ENCODE measurements at regions of chr5 and their contacts with region 1.

Region 1: DNA sequence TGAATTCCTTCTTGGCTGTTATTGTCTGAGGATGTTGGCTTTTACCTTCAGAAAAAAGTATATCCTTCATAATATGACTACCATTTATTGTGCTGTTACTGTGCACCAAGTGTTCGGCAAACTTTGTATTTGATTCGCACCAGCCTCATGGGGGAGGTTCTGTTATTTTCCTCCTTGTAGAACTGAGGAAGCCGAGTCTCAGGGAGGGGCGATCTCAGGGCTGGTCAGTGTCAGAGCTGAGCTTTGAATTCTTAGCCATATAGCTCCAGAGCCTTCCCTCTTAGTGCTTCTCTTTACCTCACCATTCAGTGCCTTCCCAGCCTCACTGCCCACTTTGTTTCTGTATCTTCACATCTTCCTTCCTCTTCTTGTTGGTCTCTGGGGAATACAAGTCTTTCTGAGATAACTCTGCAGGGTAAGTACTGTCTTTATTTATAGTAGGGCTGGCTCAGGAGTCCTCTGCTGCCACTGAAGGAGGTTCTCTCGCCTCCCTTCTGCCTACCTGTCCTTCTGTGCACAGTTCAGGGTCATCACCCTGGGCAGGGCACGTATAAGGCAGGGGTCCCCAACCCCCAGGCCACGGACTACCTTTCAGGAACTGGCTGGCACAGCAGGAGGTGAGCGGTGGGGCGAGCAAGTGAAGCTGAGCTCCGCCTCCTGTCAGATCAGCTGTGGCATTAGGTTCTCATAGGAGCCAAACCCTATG is 48.4 kb downstream of the GALNT10 start:
- DNase-seq: no peak
- H3K4me3 ChIP-seq: no peak overlapping the region
- H3K27ac ChIP-seq: no peak overlapping the region
- H3K4me1 ChIP-seq: no peaks in the 10 kb centered on the region
- H3K27me3 ChIP-seq: no peaks in the 10 kb centered on the region
- CTCF ChIP-seq: no peak
- POLR2A ChIP-seq: no peak

Region 2: GRCh38 chr5:154311362-154311761 is 72.4 kb after region 1 on chr5:
- intact Hi-C with region 1: loop called (anchors 2 kb)
- DNase-seq: no peak
- H3K4me3 ChIP-seq: no peak overlapping the region
- H3K27ac ChIP-seq: no peak overlapping the region
- H3K4me1 ChIP-seq: no peaks in the 10 kb centered on the region
- H3K27me3 ChIP-seq: no peaks in the 10 kb centered on the region
- CTCF ChIP-seq: no peak
- POLR2A ChIP-seq: no peak